ENCODE measurements at regions of chr16 and their contacts with region 1.

Region 1: DNA sequence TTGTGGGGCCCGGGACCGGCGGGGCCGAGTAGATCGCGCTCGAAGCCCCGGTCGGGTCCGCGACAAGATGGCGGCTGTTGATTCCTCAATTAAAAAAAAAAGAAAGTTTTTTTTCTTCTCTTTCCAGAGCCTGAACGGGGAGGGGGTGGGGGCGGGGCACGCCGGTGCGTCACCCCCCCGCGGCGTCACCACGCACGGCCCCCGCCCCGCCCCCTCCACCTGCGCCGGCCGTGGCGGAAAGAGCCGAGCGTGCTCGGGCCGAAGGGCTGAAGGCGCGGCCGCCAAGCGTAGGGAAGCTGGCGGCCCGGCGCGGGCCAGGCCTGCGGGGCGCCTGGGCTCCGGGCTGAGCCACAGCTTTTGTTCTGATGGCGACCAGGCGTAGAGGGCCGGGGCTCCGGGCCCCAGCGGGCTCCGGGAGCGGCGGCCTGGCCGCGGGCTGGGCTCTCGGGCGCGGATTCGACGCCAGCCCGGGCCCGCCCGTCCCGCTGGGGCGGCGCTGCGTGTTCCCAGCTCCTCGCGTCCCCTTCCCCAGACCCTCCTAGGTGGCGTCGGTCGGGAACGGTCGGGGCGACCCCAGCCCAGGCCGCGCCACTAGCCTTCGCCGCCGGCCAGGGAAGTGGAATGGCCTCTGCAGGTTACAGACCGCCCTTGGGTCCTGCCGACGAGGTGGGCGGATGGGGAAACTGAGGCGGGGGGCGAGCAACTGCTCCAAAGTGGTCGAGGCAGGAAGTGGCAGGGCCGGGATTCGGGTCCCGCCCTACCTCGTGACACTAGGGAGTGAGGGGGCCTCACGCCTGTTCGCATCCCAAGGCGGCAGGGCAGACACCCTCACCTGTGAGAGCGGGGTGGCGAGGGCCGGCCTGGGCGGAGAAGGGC is at the start of gene CREBBP:
- DNase-seq: peak; percentile 84
- H3K4me3 ChIP-seq: peak within 1 kb of the TSS; percentile 83 to 97 (median 90)
- H3K27ac ChIP-seq: peak within 1 kb of the TSS; percentile 80
- H3K4me1 ChIP-seq: peaks cover 12% of the 10 kb centered on the region
- H3K27me3 ChIP-seq: no peaks in the 10 kb centered on the region
- CTCF ChIP-seq: no peak
- total RNA-seq, gene CREBBP: 20.2 to 45.0 TPM

Region 2: DNA sequence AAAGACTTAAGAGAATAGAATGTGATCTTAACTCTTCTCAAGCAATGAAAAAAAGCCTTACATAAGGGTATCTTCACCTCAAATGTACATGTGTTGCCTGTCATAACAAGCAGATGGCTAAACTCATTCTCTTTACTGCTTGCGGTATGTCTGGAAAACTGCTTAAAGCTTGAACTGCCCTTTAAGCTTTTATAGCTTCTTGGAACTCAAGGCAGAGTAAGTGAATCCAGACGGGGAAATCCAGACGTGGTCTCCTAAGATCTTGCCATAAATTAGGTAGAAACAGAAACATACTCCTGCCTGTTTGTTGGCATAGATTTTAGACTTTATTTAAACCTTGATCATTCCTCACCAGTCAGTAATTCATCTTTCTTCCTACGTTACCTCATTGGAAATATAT is 360.4 kb before region 1 on chr16:
- CTCF ChIA-PET with region 1: no interaction called
- dilution Hi-C with region 1: no loop called
- in situ Hi-C with region 1: no loop called
- intact Hi-C with region 1: loop called (anchors 10 kb)
- DNase-seq: no peak
- H3K4me3 ChIP-seq: no peak overlapping the region
- H3K27ac ChIP-seq: no peak overlapping the region
- H3K4me1 ChIP-seq: no peaks in the 10 kb centered on the region
- H3K27me3 ChIP-seq: no peaks in the 10 kb centered on the region
- CTCF ChIP-seq: no peak

Region 3: DNA sequence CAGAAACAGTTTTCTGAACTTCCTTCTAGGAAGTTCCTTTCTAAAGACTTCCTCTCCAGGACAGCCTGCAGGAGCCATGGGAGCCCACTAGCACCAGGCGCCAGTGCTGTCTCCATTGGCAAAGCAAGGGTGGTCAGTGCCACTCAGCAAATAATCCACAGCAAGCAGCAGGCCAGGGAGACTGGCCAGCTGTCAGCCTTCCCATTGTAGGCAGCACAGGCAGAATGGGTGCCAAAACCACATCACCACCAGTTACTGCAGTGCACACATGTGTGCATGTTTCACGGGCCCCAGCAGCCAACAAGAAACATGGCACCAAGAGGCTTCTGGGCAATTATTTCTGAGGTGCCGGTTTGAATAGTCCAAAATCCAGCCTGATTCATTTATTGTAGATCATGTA is 199.7 kb before region 1 on chr16:
- CTCF ChIA-PET with region 1: no interaction called
- dilution Hi-C with region 1: no loop called
- in situ Hi-C with region 1: loop called in 1 of 2 experiments (anchors 10 kb)
- intact Hi-C with region 1: no loop called
- DNase-seq: no peak
- H3K4me3 ChIP-seq: no peak overlapping the region
- H3K27ac ChIP-seq: no peak overlapping the region
- H3K4me1 ChIP-seq: no peaks in the 10 kb centered on the region
- H3K27me3 ChIP-seq: no peaks in the 10 kb centered on the region
- CTCF ChIP-seq: no peak

Region 4: GRCh38 chr16:3717235-3718018 is 163.4 kb before region 1 on chr16 and contains the start of gene TRAP1:
- CTCF ChIA-PET with region 1: no interaction called
- dilution Hi-C with region 1: loop called (anchors 5 kb)
- in situ Hi-C with region 1: no loop called
- intact Hi-C with region 1: no loop called
- DNase-seq: peak; percentile 68
- H3K4me3 ChIP-seq: peak within 1 kb of the TSS; percentile 95 to 100 (median 96)
- H3K27ac ChIP-seq: peak within 1 kb of the TSS; percentile 58
- H3K4me1 ChIP-seq: peaks cover 11% of the 10 kb centered on the region
- H3K27me3 ChIP-seq: no peaks in the 10 kb centered on the region
- CTCF ChIP-seq: no peak
- total RNA-seq, gene TRAP1: 73.5 to 97.2 TPM

Region 5: GRCh38 chr16:3807425-3808123 is 73.3 kb before region 1 on chr16:
- CTCF ChIA-PET with region 1: no interaction called
- dilution Hi-C with region 1: loop called (anchors 5 kb)
- in situ Hi-C with region 1: no loop called
- intact Hi-C with region 1: no loop called
- DNase-seq: no peak
- H3K4me3 ChIP-seq: no peak overlapping the region
- H3K27ac ChIP-seq: no peak overlapping the region
- H3K4me1 ChIP-seq: no peaks in the 10 kb centered on the region
- H3K27me3 ChIP-seq: no peaks in the 10 kb centered on the region
- CTCF ChIP-seq: no peak

Region 6: GRCh38 chr16:3961449-3961849 is 80.6 kb after region 1 on chr16:
- CTCF ChIA-PET with region 1: no interaction called
- dilution Hi-C with region 1: no loop called
- in situ Hi-C with region 1: no loop called
- intact Hi-C with region 1: loop called (anchors 5 kb)
- DNase-seq: peak; percentile 58
- H3K4me3 ChIP-seq: no peak overlapping the region
- H3K27ac ChIP-seq: no peak overlapping the region
- H3K4me1 ChIP-seq: no peaks in the 10 kb centered on the region
- H3K27me3 ChIP-seq: peaks cover 7% of the 10 kb centered on the region
- CTCF ChIP-seq: no peak

Measured in mammary epithelial cell (primary cell).